CD8-positive, alpha-beta T cell (primary cell): ENCODE measurements at regions of chr1 and their contacts with region 1.

Region 1: GRCh38 chr1:160726498-160727315 is 12.3 kb upstream of the SLAMF7 start:
- DNase-seq: peak; percentile 29 to 89 (median 63)
- ATAC-seq: peak; percentile 86
- H3K4me3 ChIP-seq: no peak overlapping the region
- H3K4me3 Mint-ChIP-seq: no peak overlapping the region
- H3K27ac ChIP-seq: peak overlapping the region in 1 of 2 experiments; percentile 22
- H3K27ac Mint-ChIP-seq: no peak overlapping the region
- H3K4me1 ChIP-seq: peaks cover 21% of the 10 kb centered on the region
- H3K4me1 Mint-ChIP-seq: peaks cover 16% of the 10 kb centered on the region
- H3K27me3 ChIP-seq: no peaks in the 10 kb centered on the region
- H3K27me3 Mint-ChIP-seq: no peaks in the 10 kb centered on the region
- CTCF ChIP-seq: peak; percentile 99

Region 2: DNA sequence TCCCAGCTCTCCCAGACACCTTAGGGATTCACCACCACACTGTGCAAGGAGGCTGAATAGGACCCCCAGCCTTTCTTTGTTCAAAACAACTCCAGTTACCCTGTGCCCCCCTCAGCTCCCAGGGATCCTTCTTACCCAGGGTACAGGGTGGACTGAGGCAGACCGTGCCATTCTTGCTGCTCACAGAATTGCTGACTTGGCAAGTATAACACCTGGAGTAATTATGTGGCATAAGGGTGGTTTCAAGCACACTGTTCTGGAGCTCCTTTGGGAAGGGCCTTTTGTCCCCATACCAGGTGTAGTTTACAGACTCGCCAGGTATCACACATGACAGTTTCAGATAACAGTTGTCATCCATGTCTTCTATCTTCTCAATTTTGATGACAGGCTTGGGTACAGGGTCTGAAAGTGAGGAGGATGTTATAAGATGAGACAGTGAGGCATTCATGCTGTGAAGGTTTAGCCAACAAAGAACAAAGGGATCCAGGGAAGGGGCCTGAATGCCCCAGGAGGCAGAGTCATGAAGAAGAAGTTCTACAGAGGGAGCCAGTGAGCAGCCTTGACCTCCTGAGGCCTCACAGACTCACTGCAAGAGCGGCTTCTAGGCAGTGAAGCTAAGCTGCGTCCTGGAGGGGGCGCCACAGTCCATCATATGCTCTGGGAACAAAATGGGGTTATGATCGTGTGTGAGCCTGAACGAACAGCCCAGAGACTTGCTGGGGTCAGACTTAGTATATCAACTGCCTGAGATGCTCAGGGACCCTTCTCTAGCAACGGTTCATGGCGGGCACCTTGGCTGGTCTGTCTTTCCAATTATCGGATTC is 45.4 kb before region 1 on chr1:
- CTCF ChIA-PET with region 1: interaction called, 95 read pairs
- POLR2A ChIA-PET with region 1: interaction called, 6 read pairs
- intact Hi-C with region 1: loop called (anchors 1 kb)
- DNase-seq: peak; percentile 75 to 93 (median 91)
- ATAC-seq: peak; percentile 91
- H3K4me3 ChIP-seq: no peak overlapping the region
- H3K4me3 Mint-ChIP-seq: no peak overlapping the region
- H3K27ac ChIP-seq: peak overlapping the region; percentile 1 to 71
- H3K27ac Mint-ChIP-seq: peak overlapping the region; percentile 85
- H3K4me1 ChIP-seq: peaks cover 52% of the 10 kb centered on the region
- H3K4me1 Mint-ChIP-seq: peaks cover 54% of the 10 kb centered on the region
- H3K27me3 ChIP-seq: no peaks in the 10 kb centered on the region
- H3K27me3 Mint-ChIP-seq: no peaks in the 10 kb centered on the region
- CTCF ChIP-seq: peak; percentile 82

Region 3: DNA sequence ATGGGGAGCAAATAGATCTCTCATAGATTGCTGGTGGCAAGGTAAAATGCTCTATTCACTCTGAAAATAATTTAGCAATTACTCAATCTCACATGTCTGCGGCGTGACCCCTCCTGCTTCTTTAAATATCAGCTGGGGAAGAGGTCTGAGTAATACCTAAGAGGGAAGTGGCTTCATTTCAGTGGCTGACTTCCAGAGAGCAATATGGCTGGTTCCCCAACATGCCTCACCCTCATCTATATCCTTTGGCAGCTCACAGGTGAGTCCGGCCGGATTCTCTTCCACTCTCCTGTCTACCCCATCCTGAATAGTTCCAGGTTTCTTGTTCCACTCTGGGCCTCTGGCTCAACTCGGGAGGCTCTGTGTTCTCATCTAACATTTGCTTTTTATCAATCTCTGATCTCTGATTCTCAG is 12.4 kb after region 1 on chr1 and contains the start of gene SLAMF7:
- CTCF ChIA-PET with region 1: interaction called, 13 read pairs
- POLR2A ChIA-PET with region 1: interaction called, 5 read pairs
- intact Hi-C with region 1: loop called in 1 of 2 experiments (anchors 2 kb)
- DNase-seq: peak in 7 of 9 experiments; percentile 24 to 85 (median 57)
- ATAC-seq: peak; percentile 76
- H3K4me3 ChIP-seq: peak within 1 kb of the TSS; percentile 22 to 52
- H3K4me3 Mint-ChIP-seq: peak within 1 kb of the TSS; percentile 84
- H3K27ac ChIP-seq: peak within 1 kb of the TSS in 1 of 2 experiments; percentile 79
- H3K27ac Mint-ChIP-seq: peak within 1 kb of the TSS; percentile 86
- H3K4me1 ChIP-seq: peaks cover 29% of the 10 kb centered on the region
- H3K4me1 Mint-ChIP-seq: peaks cover 58% of the 10 kb centered on the region
- H3K27me3 ChIP-seq: no peaks in the 10 kb centered on the region
- H3K27me3 Mint-ChIP-seq: no peaks in the 10 kb centered on the region
- CTCF ChIP-seq: no peak
- total RNA-seq, gene SLAMF7: 13.3 to 14.8 TPM

Region 4: DNA sequence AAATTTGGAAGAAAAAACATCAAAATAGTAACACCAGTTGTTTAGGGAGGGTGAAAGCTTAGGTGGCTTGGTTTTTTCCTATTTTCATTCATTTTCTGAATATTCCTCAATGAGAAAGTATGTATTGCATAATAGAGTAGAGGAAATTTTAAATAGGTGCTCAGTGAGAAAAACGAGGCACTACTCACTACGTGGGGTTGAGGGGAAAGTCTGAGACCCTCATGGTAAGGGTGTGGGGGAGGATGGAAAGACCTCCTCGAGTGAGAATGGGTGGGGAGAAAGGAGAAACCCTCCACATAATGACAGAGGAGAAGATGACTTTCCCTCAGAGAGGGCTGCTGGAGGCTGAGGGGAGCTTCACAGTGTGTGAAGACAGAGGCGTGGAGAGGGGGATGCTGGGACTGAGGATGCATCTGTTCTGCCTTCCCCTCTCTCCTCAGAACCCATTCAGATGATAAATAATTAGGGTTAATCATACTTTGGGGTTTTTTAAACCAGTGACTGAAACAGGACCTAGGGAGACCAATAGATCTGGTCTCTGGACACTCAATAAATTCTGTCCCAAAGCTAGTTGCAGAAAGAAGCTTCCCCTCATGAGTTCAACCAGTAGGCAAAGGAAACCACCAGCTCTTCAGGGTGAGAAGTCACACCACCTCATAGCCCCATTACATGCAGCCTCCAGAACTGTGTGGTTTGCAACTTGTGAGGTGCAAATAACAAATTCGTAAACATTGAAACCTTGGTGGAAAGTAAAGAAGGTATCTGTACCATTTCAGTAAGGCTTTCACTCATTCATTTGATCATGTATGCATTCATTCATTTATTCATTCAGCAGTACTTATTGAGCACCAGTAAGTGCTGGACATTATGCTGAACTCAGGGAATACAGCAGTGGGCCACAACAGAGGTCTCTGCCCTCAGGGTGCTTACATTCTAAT is 29.5 kb after region 1 on chr1:
- CTCF ChIA-PET with region 1: interaction called, 279 read pairs
- POLR2A ChIA-PET with region 1: interaction called, 3 read pairs
- intact Hi-C with region 1: no loop called
- DNase-seq: peak in 4 of 9 experiments; percentile 26 to 91 (median 70)
- ATAC-seq: peak; percentile 63
- H3K4me3 ChIP-seq: peak overlapping the region in 1 of 2 experiments; percentile 3
- H3K4me3 Mint-ChIP-seq: peak overlapping the region; percentile 37
- H3K27ac ChIP-seq: peak overlapping the region; percentile 34 to 71
- H3K27ac Mint-ChIP-seq: peak overlapping the region; percentile 94
- H3K4me1 ChIP-seq: peaks cover 31% of the 10 kb centered on the region
- H3K4me1 Mint-ChIP-seq: peaks cover 49% of the 10 kb centered on the region
- H3K27me3 ChIP-seq: no peaks in the 10 kb centered on the region
- H3K27me3 Mint-ChIP-seq: no peaks in the 10 kb centered on the region
- CTCF ChIP-seq: no peak

Region 5: GRCh38 chr1:160777486-160778089 is 50.9 kb after region 1 on chr1:
- CTCF ChIA-PET with region 1: interaction called, 49 read pairs
- POLR2A ChIA-PET with region 1: no interaction called
- intact Hi-C with region 1: no loop called
- DNase-seq: peak in 7 of 9 experiments; percentile 33 to 79 (median 52)
- ATAC-seq: peak; percentile 84
- H3K4me3 ChIP-seq: no peak overlapping the region
- H3K4me3 Mint-ChIP-seq: no peak overlapping the region
- H3K27ac ChIP-seq: no peak overlapping the region
- H3K27ac Mint-ChIP-seq: no peak overlapping the region
- H3K4me1 ChIP-seq: no peaks in the 10 kb centered on the region
- H3K4me1 Mint-ChIP-seq: peaks cover 20% of the 10 kb centered on the region
- H3K27me3 ChIP-seq: no peaks in the 10 kb centered on the region
- H3K27me3 Mint-ChIP-seq: no peaks in the 10 kb centered on the region
- CTCF ChIP-seq: peak; percentile 77

Region 6: DNA sequence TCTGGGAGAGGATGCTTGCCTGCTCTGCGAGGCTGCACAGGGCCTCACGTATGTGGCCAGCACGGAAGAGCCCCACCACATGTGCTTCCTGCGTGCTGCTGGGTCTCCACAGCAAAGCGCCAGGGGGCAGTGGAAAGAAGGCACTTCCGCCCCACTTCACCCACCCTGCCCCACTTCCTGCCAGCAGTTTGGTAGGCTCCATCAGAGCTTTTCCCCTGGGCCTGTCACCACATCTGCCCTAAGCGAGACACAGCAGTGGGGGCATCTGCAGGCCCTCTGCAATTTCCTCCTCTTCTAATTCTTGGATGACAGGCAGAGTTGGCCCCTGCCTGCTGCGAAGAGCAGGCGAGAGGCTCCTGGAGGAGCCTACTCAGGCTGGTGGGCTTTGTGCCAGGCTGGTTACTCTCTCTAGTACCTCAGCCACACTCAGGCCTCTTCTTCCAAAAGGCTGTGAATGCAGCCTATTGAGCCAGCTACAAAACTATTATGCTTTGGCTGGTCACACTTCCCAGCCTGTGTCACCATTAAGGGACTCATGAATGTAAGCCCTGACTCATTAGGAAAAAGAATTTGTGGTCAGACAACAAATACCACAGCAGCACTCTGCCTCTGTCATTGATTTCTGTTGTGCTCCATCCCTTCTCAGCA is 111.0 kb after region 1 on chr1:
- CTCF ChIA-PET with region 1: interaction called, 13 read pairs
- POLR2A ChIA-PET with region 1: interaction called, 3 read pairs
- intact Hi-C with region 1: no loop called
- DNase-seq: peak; percentile 70 to 96 (median 88)
- ATAC-seq: peak; percentile 91
- H3K4me3 ChIP-seq: peak overlapping the region; percentile 17 to 34
- H3K4me3 Mint-ChIP-seq: peak overlapping the region; percentile 84
- H3K27ac ChIP-seq: peak overlapping the region; percentile 54 to 77
- H3K27ac Mint-ChIP-seq: peak overlapping the region; percentile 96
- H3K4me1 ChIP-seq: peaks cover 85% of the 10 kb centered on the region
- H3K4me1 Mint-ChIP-seq: peaks cover 84% of the 10 kb centered on the region
- H3K27me3 ChIP-seq: no peaks in the 10 kb centered on the region
- H3K27me3 Mint-ChIP-seq: no peaks in the 10 kb centered on the region
- CTCF ChIP-seq: peak; percentile 27